Upper lobe of right lung (tissue), 1 donor: ENCODE measurements at regions of chr14 and their contacts with region 1.

Region 1: GRCh38 chr14:88168498-88169165 is 154.4 kb downstream of the KCNK10 start:
- DNase-seq: no peak
- ATAC-seq: peak; percentile 97
- H3K4me3 ChIP-seq: no peak overlapping the region
- H3K27ac ChIP-seq: no peak overlapping the region
- H3K4me1 ChIP-seq: no peaks in the 10 kb centered on the region
- H3K27me3 ChIP-seq: no peaks in the 10 kb centered on the region
- CTCF ChIP-seq: peak; percentile 70

Region 2: GRCh38 chr14:87944987-87945604 is 223.5 kb before region 1 on chr14:
- intact Hi-C with region 1: loop called (anchors 10 kb)
- DNase-seq: no peak
- ATAC-seq: peak; percentile 51
- H3K4me3 ChIP-seq: no peak overlapping the region
- H3K27ac ChIP-seq: no peak overlapping the region
- H3K4me1 ChIP-seq: no peaks in the 10 kb centered on the region
- H3K27me3 ChIP-seq: no peaks in the 10 kb centered on the region
- CTCF ChIP-seq: peak; percentile 77

Region 3: GRCh38 chr14:88013750-88014349 is 154.8 kb before region 1 on chr14:
- intact Hi-C with region 1: loop called (anchors 10 kb)
- DNase-seq: peak; percentile 64
- ATAC-seq: peak; percentile 99
- H3K4me3 ChIP-seq: no peak overlapping the region
- H3K27ac ChIP-seq: no peak overlapping the region
- H3K4me1 ChIP-seq: no peaks in the 10 kb centered on the region
- H3K27me3 ChIP-seq: no peaks in the 10 kb centered on the region
- CTCF ChIP-seq: peak; percentile 88